PC-3 (cell line): ENCODE measurements at regions of chr14 and their contacts with region 1.

Region 1: GRCh38 chr14:23861666-23862065 is 91.9 kb upstream of the DHRS4 start:
- DNase-seq: no peak
- ATAC-seq: no peak
- H3K4me3 ChIP-seq: no peak overlapping the region
- H3K27ac ChIP-seq: no peak overlapping the region
- H3K4me1 ChIP-seq: no peaks in the 10 kb centered on the region
- H3K27me3 ChIP-seq: peaks cover 32% of the 10 kb centered on the region; the same call in 1 of the 2 replicates
- CTCF ChIP-seq: no peak

Region 2: GRCh38 chr14:23555882-23556699 is 305.6 kb before region 1 on chr14 and contains the start of gene THTPA:
- CTCF ChIA-PET with region 1: interaction called, 11 read pairs
- POLR2A ChIA-PET with region 1: no interaction called
- intact Hi-C with region 1: no loop called
- DNase-seq: peak; percentile 90
- ATAC-seq: peak; percentile 75
- H3K4me3 ChIP-seq: peak within 1 kb of the TSS; percentile 85
- H3K27ac ChIP-seq: peak within 1 kb of the TSS; percentile 60
- H3K4me1 ChIP-seq: peaks cover 19% of the 10 kb centered on the region; the same call in 1 of the 2 replicates
- H3K27me3 ChIP-seq: no peaks in the 10 kb centered on the region
- CTCF ChIP-seq: no peak
- total RNA-seq, gene THTPA: 13.0 and 27.2 TPM in 2 replicates

Region 3: GRCh38 chr14:24036169-24036962 is 174.7 kb after region 1 on chr14:
- CTCF ChIA-PET with region 1: no interaction called
- POLR2A ChIA-PET with region 1: no interaction called
- intact Hi-C with region 1: no loop called
- DNase-seq: peak; percentile 70
- ATAC-seq: peak; percentile 97
- H3K4me3 ChIP-seq: peak overlapping the region; percentile 71
- H3K27ac ChIP-seq: no peak overlapping the region
- H3K4me1 ChIP-seq: no peaks in the 10 kb centered on the region
- H3K27me3 ChIP-seq: no peaks in the 10 kb centered on the region
- CTCF ChIP-seq: peak; percentile 85